Gastrocnemius medialis (tissue), 4 donors: ENCODE measurements at regions of chrX and their contacts with region 1.

Region 1: GRCh38 chrX:32673193-32673592 is 538.2 kb downstream of the DMD start:
- DNase-seq: no peak
- ATAC-seq: no peak
- H3K4me3 ChIP-seq: no peak overlapping the region
- H3K27ac ChIP-seq: peak overlapping the region in 2 of 4 donors; percentile 34 to 47
- H3K4me1 ChIP-seq: peaks cover 0 to 3% of the 10 kb centered on the region in 2 donors
- H3K27me3 ChIP-seq: no peaks in the 10 kb centered on the region
- CTCF ChIP-seq: peak in 4 of 5 experiments; percentile 7 to 20 (median 12)
- POLR2A ChIP-seq: no peak

Region 2: GRCh38 chrX:32483534-32484136 is 189.6 kb before region 1 on chrX:
- in situ Hi-C with region 1: no loop called
- intact Hi-C with region 1: no loop called
- DNase-seq: no peak
- ATAC-seq: no peak
- H3K4me3 ChIP-seq: no peak overlapping the region
- H3K27ac ChIP-seq: no peak overlapping the region
- H3K4me1 ChIP-seq: no peaks in the 10 kb centered on the region
- H3K27me3 ChIP-seq: no peaks in the 10 kb centered on the region
- CTCF ChIP-seq: peak in 1 of 5 experiments; percentile 23
- POLR2A ChIP-seq: no peak

Region 3: DNA sequence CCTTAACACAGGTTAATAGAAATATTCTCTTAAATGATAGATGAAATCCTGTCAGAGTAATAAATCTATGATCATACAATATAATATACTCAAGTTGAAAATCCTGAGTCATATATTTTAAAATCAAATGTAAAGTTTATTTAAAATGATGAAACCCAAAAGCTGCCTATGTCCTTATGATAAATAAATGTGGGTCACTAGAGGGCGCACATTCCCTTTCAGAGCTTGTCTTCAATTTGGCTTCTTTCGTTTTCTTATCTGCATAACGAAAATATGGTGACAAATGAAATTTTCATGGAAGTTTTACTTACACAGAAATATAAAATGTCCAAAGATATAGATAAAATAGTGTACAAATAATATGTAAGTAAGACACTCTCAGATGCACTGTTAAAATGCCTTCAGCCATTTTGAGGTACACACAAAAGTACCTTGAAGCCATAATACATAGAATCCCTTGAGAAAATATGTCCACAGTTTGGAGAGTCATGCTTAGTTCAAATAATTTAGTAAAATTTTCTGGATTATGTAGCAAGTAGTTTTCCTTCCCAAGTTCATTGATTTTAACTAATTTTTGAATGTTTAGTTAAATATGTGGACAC is 142.3 kb before region 1 on chrX:
- in situ Hi-C with region 1: no loop called
- intact Hi-C with region 1: loop called (anchors 2 kb)
- DNase-seq: no peak
- ATAC-seq: no peak
- H3K4me3 ChIP-seq: peak overlapping the region in 1 of 4 donors; percentile 43
- H3K27ac ChIP-seq: no peak overlapping the region
- H3K4me1 ChIP-seq: no peaks in the 10 kb centered on the region
- H3K27me3 ChIP-seq: no peaks in the 10 kb centered on the region
- CTCF ChIP-seq: peak in 2 of 5 experiments; percentile 34 to 52
- POLR2A ChIP-seq: no peak